ENCODE measurements at regions of chr12 and their contacts with region 1.

Region 1: GRCh38 chr12:58186914-58187313 is 245.5 kb downstream of the ATP23 start:
- DNase-seq: no peak

Region 2: DNA sequence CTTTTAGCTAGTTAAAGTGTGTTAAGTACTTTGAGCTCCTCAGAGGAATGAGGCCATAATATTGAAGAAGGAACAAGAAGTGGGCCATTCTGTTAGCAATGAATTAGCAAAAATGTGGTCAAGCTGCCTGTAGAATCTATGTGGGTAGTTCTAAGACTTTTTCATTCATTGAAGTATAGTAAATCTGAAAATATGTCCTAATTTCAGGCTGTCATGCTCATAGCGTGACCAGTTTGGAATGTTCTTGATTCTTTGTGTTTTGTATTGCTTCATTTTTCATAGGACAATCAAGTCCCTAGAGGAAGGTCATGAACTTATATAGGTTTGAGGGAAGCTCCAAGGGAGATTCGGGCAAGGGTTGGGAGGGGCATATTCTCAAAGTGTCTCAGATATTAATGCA is 234.1 kb before region 1 on chr12:
- intact Hi-C with region 1: no loop called
- DNase-seq: no peak

Region 3: DNA sequence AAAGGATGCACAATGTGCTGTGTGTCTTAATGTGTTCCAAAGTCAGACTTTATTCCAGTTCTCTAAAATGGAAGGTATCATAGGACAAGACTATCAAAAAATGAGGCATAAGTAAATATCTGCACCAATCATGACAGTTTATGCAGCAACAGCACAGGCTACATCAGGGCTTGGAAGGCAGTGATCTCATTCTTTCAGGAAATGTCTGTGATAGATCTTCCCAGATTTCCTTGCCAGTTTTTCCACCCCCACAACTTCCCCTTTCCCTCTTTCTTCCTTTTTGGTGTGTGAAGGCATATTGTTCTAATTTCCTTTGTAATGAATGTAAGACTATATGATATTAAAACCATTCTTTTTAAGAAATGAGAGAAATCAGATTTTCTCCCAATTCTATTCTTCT is 81.2 kb after region 1 on chr12:
- intact Hi-C with region 1: no loop called
- DNase-seq: no peak

Region 4: DNA sequence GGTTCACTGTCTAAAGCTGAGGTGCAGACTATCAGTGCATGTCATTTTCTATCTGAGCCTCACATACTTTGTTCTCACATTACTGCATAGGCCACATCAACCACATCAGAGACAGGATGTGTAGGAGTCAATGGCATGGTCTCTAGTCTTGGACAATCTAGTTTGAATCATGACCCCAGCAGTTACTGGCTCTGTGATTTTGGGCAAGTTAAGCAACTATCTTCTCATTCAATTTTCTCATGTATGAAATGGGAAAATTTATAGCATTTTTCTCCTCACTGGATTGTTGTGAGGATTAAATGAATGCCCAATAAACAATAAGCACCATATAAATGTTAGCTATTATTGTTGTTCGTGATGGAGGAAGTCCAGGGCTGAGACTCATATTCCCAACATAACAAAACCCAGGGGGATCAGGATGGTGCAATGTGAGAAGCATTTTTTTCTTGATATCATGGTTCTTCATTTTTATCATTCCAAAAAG is 300.8 kb after region 1 on chr12:
- intact Hi-C with region 1: no loop called
- DNase-seq: no peak

Region 5: DNA sequence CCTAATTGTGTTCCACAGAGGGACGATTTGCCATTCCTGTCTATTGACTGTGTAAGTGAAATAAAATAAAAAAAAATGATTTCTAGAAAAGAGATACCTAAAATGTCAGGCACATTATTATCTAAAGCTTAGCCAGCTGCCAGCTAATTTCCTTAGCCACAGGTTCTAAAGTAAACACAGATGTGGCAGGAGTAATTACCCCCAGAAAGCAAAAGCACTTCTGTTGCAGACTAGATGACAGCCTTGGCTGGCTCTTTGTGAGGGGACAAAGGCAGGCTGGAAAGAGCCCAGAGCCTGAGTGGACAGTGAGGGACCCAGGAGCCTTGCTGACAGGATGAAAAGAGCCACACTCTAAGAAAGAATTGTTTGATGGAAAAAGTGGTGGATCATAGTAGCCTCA is 315.3 kb after region 1 on chr12:
- intact Hi-C with region 1: loop called (anchors 10 kb)
- DNase-seq: no peak

Measured in cardiac septum (tissue), 1 donor.